Ascending aorta (tissue), 2 donors: ENCODE measurements at regions of chr13 and their contacts with region 1.

Region 1: DNA sequence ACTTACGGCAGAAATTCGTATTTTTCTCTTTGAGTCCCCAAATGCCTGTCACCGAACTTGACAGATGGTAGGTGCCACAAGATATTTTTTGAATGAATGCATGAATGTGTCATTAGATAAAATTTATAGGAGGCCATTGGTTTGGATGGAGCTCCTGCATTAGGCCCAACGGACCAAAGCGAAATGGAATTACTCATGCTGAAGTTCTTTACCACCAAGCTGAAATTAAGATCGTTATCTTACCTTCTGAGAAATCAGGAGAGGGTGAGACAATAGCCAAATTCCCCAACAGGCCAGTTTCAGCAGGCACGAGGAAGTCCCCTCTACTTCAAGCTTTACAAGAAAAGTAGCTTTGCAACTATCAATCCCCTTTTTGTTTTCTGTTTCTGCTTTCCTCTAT is 452.5 kb upstream of the ARGLU1 start:
- DNase-seq: no peak
- H3K4me3 ChIP-seq: no peak overlapping the region
- H3K27ac ChIP-seq: no peak overlapping the region
- H3K4me1 ChIP-seq: peaks cover 0 to 7% of the 10 kb centered on the region in 2 donors
- H3K27me3 ChIP-seq: no peaks in the 10 kb centered on the region
- CTCF ChIP-seq: no peak

Region 2: DNA sequence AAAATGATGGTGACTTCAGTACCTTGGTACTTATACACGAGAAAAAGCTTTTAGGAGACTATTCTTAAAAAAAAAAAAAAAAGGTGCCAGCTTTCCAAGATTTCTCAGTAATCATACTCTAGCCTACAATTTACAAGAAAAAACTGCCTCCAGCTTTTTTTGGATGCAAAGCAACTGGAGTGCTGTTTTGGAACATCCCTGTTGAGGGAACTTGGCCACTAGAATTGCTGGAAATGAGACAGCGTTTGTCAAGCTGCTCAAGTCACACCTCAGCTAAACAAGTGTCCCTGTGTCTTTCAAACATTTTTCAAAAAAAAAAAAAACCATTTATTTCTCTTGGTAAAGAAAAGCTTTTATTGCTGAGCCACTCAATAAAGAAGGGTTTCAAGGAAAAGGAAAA is 39.3 kb before region 1 on chr13:
- intact Hi-C with region 1: loop called (anchors 5 kb)
- DNase-seq: no peak
- H3K4me3 ChIP-seq: peak overlapping the region in 1 of 2 donors; percentile 37
- H3K27ac ChIP-seq: peak overlapping the region; percentile 25 to 53
- H3K4me1 ChIP-seq: peaks cover 0 to 4% of the 10 kb centered on the region in 2 donors
- H3K27me3 ChIP-seq: no peaks in the 10 kb centered on the region
- CTCF ChIP-seq: no peak

Region 3: GRCh38 chr13:107351308-107351707 is 330.9 kb after region 1 on chr13:
- intact Hi-C with region 1: no loop called
- DNase-seq: no peak
- H3K4me3 ChIP-seq: no peak overlapping the region
- H3K27ac ChIP-seq: no peak overlapping the region
- H3K4me1 ChIP-seq: no peaks in the 10 kb centered on the region
- H3K27me3 ChIP-seq: no peaks in the 10 kb centered on the region
- CTCF ChIP-seq: no peak